ENCODE measurements at regions of chr6 and their contacts with region 1.

Region 1: GRCh38 chr6:11439017-11439420 is 98.5 kb upstream of the TMEM170B start:
- DNase-seq: no peak
- H3K4me3 ChIP-seq: no peak overlapping the region
- H3K27ac ChIP-seq: no peak overlapping the region
- H3K4me1 ChIP-seq: no peaks in the 10 kb centered on the region
- CTCF ChIP-seq: no peak

Region 2: DNA sequence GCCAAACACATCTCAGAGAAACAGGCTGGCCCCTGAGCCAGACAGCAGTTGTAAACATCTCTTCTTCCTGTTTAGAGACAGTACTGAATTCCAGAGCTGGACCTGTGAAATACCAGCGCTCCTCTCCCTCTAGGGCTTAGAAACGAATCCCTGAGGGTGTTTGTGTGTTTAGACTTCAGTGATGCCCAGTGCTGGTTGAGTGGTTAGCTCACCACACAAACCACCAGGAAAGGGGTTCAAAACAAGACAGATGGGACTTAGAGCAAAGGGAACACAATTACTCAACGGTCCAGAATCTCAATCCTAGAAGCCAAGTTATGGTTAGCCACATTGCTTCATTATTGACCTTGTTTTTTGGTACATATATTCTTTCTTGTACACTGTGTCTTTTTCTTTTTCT is 10.1 kb before region 1 on chr6:
- CTCF ChIA-PET with region 1: interaction called, 4 read pairs
- POLR2A ChIA-PET with region 1: interaction called, 10 read pairs
- intact Hi-C with region 1: no loop called
- DNase-seq: peak; percentile 18
- H3K4me3 ChIP-seq: no peak overlapping the region
- H3K27ac ChIP-seq: no peak overlapping the region
- H3K4me1 ChIP-seq: peaks cover 17% of the 10 kb centered on the region
- CTCF ChIP-seq: no peak

Region 3: GRCh38 chr6:11952316-11952715 is 513.3 kb after region 1 on chr6:
- CTCF ChIA-PET with region 1: no interaction called
- POLR2A ChIA-PET with region 1: no interaction called
- intact Hi-C with region 1: no loop called
- DNase-seq: no peak
- H3K4me3 ChIP-seq: no peak overlapping the region
- H3K27ac ChIP-seq: no peak overlapping the region
- H3K4me1 ChIP-seq: no peaks in the 10 kb centered on the region
- CTCF ChIP-seq: no peak